OCI-LY7 (cell line): ENCODE measurements at regions of chr6 and their contacts with region 1.

Region 1: DNA sequence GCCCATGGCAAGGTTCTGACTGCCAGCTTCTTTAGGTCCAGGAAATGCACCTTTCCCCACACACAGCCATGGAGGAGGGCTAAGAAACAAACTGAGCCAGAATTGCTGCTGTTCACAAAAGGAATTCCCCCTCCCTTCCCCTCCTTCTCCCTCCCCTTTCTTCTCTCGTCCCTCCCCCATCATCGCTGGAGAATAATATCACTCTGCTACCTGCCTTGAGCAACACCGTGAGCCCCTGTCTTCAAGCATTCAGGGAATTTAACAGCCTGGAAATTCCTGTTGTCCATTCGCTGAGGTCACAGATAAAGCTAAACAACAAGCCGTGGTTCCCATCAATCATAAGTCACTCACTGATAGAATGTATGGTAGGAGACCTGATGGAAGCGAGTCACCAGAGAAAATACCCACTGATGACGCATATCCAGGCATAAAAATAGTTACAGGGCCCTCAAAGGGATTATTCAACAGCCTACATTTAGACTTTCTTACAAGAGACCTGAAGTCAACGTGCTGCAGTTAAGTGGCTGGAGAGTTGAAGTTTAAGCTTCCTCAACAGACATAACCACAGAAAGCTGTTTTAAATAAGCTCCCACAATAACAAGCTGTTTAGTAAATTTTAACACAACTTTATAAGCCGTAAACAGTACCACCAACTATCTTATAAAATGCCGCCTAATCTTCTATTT is 59.7 kb downstream of the HIVEP2 start:
- DNase-seq: peak; percentile 69
- H3K4me3 ChIP-seq: peak overlapping the region; percentile 35
- H3K27ac ChIP-seq: peak overlapping the region; percentile 13
- H3K4me1 ChIP-seq: peaks cover 49% of the 10 kb centered on the region
- CTCF ChIP-seq: no peak

Region 2: GRCh38 chr6:142561511-142562265 is 323.6 kb before region 1 on chr6:
- CTCF ChIA-PET with region 1: no interaction called
- POLR2A ChIA-PET with region 1: no interaction called
- intact Hi-C with region 1: no loop called
- DNase-seq: no peak
- H3K4me3 ChIP-seq: no peak overlapping the region
- H3K27ac ChIP-seq: no peak overlapping the region
- H3K4me1 ChIP-seq: no peaks in the 10 kb centered on the region
- CTCF ChIP-seq: no peak

Region 3: GRCh38 chr6:142746524-142746923 is 138.8 kb before region 1 on chr6:
- CTCF ChIA-PET with region 1: interaction called, 3 read pairs
- POLR2A ChIA-PET with region 1: interaction called, 3 read pairs
- intact Hi-C with region 1: loop called (anchors 1 kb)
- DNase-seq: peak; percentile 67
- H3K4me3 ChIP-seq: no peak overlapping the region
- H3K27ac ChIP-seq: no peak overlapping the region
- H3K4me1 ChIP-seq: no peaks in the 10 kb centered on the region
- CTCF ChIP-seq: peak; percentile 81

Region 4: GRCh38 chr6:142763205-142763604 is 122.1 kb before region 1 on chr6:
- CTCF ChIA-PET with region 1: no interaction called
- POLR2A ChIA-PET with region 1: no interaction called
- intact Hi-C with region 1: no loop called
- DNase-seq: no peak
- H3K4me3 ChIP-seq: no peak overlapping the region
- H3K27ac ChIP-seq: no peak overlapping the region
- H3K4me1 ChIP-seq: peaks cover 5% of the 10 kb centered on the region
- CTCF ChIP-seq: no peak

Region 5: DNA sequence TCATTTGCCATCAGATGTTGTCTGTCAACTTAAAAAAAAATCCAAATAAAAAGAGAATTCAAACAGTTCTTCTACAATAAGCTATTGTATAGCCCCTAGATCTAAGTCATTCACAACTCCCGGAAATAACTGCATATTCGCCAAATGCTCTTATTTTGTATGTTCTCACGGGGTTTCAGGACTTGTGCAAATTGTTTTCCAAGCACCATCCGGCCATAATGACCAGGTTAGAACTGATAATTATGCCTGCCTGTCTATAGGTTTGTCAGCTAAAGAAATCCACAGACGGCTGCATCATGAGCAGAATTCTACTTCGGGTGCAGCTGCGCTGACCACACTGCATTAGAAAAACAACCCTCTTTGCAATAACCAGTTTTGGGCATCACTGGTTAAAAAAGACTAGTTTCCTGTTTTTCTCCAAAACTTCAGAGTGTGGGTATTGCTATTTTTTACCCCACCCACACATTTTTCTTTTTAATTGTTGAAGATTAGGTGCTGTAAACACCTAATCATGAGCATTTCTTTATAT is 28.0 kb before region 1 on chr6:
- CTCF ChIA-PET with region 1: interaction called, 4 read pairs
- POLR2A ChIA-PET with region 1: interaction called, 8 read pairs
- intact Hi-C with region 1: loop called (anchors 1 kb)
- DNase-seq: peak; percentile 86
- H3K4me3 ChIP-seq: peak overlapping the region; percentile 61
- H3K27ac ChIP-seq: peak overlapping the region; percentile 94
- H3K4me1 ChIP-seq: peaks cover 91% of the 10 kb centered on the region
- CTCF ChIP-seq: no peak

Region 6: GRCh38 chr6:142871910-142872331 is 13.4 kb before region 1 on chr6:
- CTCF ChIA-PET with region 1: no interaction called
- POLR2A ChIA-PET with region 1: interaction called, 29 read pairs
- intact Hi-C with region 1: no loop called
- DNase-seq: no peak
- H3K4me3 ChIP-seq: no peak overlapping the region
- H3K27ac ChIP-seq: no peak overlapping the region
- H3K4me1 ChIP-seq: peaks cover 42% of the 10 kb centered on the region
- CTCF ChIP-seq: no peak

Region 7: GRCh38 chr6:142946181-142946923 is 61.0 kb after region 1 on chr6:
- CTCF ChIA-PET with region 1: no interaction called
- POLR2A ChIA-PET with region 1: interaction called, 4 read pairs
- intact Hi-C with region 1: loop called (anchors 1 kb)
- DNase-seq: peak; percentile 77
- H3K4me3 ChIP-seq: peak overlapping the region; percentile 94
- H3K27ac ChIP-seq: peak overlapping the region; percentile 95
- H3K4me1 ChIP-seq: peaks cover 30% of the 10 kb centered on the region
- CTCF ChIP-seq: no peak

Region 8: DNA sequence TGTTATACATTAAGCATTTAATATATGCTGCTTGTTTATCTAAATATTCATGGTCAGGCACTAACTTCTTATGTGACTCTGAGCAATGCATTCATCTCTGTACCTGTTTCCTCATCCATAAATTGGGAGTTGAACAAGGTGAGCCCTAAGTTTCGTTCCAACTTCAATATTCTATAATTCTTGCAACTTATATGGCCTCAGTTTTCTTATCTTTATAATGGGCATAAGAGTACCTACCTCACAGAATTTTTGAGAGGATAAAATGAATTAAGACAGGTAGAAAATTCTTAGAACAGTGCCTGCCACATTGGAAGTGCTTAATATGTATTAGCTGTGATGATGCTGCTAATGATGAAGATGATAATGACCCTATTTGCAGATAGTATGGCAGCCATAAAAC is 71.4 kb after region 1 on chr6:
- CTCF ChIA-PET with region 1: no interaction called
- POLR2A ChIA-PET with region 1: no interaction called
- intact Hi-C with region 1: no loop called
- DNase-seq: no peak
- H3K4me3 ChIP-seq: no peak overlapping the region
- H3K27ac ChIP-seq: no peak overlapping the region
- H3K4me1 ChIP-seq: peaks cover 25% of the 10 kb centered on the region
- CTCF ChIP-seq: no peak

Region 9: GRCh38 chr6:143107911-143108761 is 222.8 kb after region 1 on chr6:
- CTCF ChIA-PET with region 1: no interaction called
- POLR2A ChIA-PET with region 1: no interaction called
- intact Hi-C with region 1: no loop called
- DNase-seq: no peak
- H3K4me3 ChIP-seq: no peak overlapping the region
- H3K27ac ChIP-seq: no peak overlapping the region
- H3K4me1 ChIP-seq: no peaks in the 10 kb centered on the region
- CTCF ChIP-seq: no peak